Heart left ventricle (tissue), 16 donors: ENCODE measurements at regions of chr1 and their contacts with region 1.

Region 1: GRCh38 chr1:164813776-164814175 is 254.8 kb downstream of the PBX1 start:
- DNase-seq: no peak
- ATAC-seq: no peak
- H3K4me3 ChIP-seq: no peak overlapping the region
- H3K27ac ChIP-seq: no peak overlapping the region
- H3K4me1 ChIP-seq: peaks cover 0 to 8% (median 0%) of the 10 kb centered on the region in 12 donors
- H3K27me3 ChIP-seq: no peaks in the 10 kb centered on the region
- CTCF ChIP-seq: no peak
- POLR2A ChIP-seq: no peak

Region 2: DNA sequence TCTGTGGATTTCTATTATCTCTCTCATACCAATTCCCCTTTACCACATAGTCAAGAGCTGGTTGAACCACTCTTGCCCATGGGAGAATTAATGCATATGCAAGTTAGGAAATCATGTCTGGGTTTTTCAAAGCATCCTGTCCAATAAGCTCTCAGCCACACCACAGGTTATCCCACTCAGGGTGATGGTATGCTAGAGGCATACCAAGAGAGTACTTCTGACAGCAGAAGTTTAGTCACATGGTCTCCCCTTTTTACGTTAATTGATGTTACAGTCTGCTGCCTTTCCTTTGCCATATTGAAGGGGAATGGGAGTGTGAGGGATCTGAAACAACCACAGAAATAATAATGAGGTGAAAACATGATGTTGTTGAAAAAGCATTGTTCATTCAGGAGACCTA is 390.6 kb before region 1 on chr1:
- intact Hi-C with region 1: no loop called
- DNase-seq: no peak
- ATAC-seq: no peak
- H3K4me3 ChIP-seq: no peak overlapping the region
- H3K27ac ChIP-seq: no peak overlapping the region
- H3K4me1 ChIP-seq: no peaks in the 10 kb centered on the region
- H3K27me3 ChIP-seq: no peaks in the 10 kb centered on the region
- CTCF ChIP-seq: no peak
- POLR2A ChIP-seq: no peak

Region 3: GRCh38 chr1:164891612-164892011 is 77.8 kb after region 1 on chr1:
- intact Hi-C with region 1: loop called in 1 of 10 experiments (anchors 5 kb)
- DNase-seq: no peak
- ATAC-seq: no peak
- H3K4me3 ChIP-seq: no peak overlapping the region
- H3K27ac ChIP-seq: no peak overlapping the region
- H3K4me1 ChIP-seq: no peaks in the 10 kb centered on the region
- H3K27me3 ChIP-seq: no peaks in the 10 kb centered on the region
- CTCF ChIP-seq: no peak
- POLR2A ChIP-seq: no peak